Ascending aorta (tissue), 2 donors: ENCODE measurements at regions of chr3 and their contacts with region 1.

Region 1: DNA sequence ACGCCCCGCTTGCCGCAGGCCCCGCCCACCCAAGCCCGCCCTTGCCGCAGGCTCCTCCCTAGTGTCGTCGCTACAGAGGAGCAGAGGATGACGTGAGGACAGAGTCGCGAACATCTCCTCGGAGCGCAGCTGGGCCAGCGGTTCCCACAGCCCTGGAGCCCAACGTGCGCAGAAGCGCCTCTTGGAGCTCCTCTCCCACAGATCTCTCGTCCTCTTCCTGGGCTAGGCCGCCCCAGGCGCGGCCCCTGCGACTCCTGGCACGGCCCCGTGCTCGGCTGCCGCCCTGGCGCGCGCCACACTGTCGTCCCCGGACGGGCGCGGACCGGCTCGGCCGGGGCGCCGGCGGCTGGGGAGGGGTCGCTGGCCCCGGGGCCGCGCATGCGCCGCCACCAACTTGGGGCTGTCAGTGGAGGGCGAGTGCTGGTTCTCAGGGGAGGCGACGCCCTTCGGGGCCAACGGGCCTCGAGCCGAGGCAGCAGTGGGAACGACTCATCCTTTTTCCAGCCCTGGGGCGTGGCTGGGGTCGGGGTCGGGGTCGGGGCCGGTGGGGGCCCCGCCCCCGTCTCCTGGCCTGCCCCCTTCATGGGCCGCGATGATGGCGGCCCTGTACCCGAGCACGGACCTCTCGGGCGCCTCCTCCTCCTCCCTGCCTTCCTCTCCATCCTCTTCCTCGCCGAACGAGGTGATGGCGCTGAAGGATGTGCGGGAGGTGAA is at the start of gene TRPC1:
- DNase-seq: peak; percentile 22 to 80
- H3K4me3 ChIP-seq: peak within 1 kb of the TSS; percentile 77 to 91
- H3K27ac ChIP-seq: peak within 1 kb of the TSS; percentile 78 to 87
- H3K4me1 ChIP-seq: no peaks in the 10 kb centered on the region
- H3K27me3 ChIP-seq: no peaks in the 10 kb centered on the region
- CTCF ChIP-seq: no peak
- total RNA-seq, gene TRPC1: 12.3 TPM

Region 2: GRCh38 chr3:140941434-140942220 is 1782.5 kb before region 1 on chr3 and contains the start of gene SLC25A36:
- intact Hi-C with region 1: loop called (anchors 5 kb)
- DNase-seq: peak; percentile 92 to 98
- H3K4me3 ChIP-seq: peak within 1 kb of the TSS; percentile 73 to 99
- H3K27ac ChIP-seq: peak within 1 kb of the TSS; percentile 99
- H3K4me1 ChIP-seq: peaks cover 0 to 15% of the 10 kb centered on the region in 2 donors
- H3K27me3 ChIP-seq: no peaks in the 10 kb centered on the region
- CTCF ChIP-seq: peak in 1 of 3 experiments; percentile 4
- total RNA-seq, gene SLC25A36: 19.1 TPM

Region 3: DNA sequence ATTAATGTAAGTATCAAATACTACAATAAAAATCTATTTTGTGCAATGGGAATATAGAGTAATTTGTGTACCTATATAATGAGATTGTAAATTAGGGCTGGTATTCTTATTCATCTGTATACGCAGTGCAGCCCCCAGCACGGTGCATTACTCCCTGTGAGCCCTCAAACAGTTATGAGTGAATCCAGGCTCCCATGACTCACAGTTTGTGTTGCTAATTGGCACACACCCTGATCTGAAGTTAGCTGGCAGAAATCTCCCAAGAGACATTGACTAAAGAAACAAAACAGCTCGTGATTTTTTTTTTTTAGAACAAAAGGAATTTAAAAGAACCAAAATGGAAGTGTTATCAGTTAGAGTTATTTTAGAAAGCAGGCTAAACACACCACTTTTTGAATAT is 514.5 kb before region 1 on chr3:
- intact Hi-C with region 1: no loop called
- DNase-seq: peak in 1 of 2 donors; percentile 86
- H3K4me3 ChIP-seq: peak overlapping the region; percentile 18 to 30
- H3K27ac ChIP-seq: peak overlapping the region; percentile 71 to 72
- H3K4me1 ChIP-seq: peaks cover 0 to 36% of the 10 kb centered on the region in 2 donors
- H3K27me3 ChIP-seq: no peaks in the 10 kb centered on the region
- CTCF ChIP-seq: no peak

Region 4: GRCh38 chr3:142578327-142579223 is 145.6 kb before region 1 on chr3 and contains the start of gene ATR:
- intact Hi-C with region 1: loop called (anchors 2 kb)
- DNase-seq: peak; percentile 85 to 98
- H3K4me3 ChIP-seq: peak within 1 kb of the TSS; percentile 65 to 81
- H3K27ac ChIP-seq: peak within 1 kb of the TSS; percentile 91 to 94
- H3K4me1 ChIP-seq: peaks cover 0 to 10% of the 10 kb centered on the region in 2 donors
- H3K27me3 ChIP-seq: no peaks in the 10 kb centered on the region
- CTCF ChIP-seq: no peak
- total RNA-seq, gene ATR: 8.3 TPM

Region 5: DNA sequence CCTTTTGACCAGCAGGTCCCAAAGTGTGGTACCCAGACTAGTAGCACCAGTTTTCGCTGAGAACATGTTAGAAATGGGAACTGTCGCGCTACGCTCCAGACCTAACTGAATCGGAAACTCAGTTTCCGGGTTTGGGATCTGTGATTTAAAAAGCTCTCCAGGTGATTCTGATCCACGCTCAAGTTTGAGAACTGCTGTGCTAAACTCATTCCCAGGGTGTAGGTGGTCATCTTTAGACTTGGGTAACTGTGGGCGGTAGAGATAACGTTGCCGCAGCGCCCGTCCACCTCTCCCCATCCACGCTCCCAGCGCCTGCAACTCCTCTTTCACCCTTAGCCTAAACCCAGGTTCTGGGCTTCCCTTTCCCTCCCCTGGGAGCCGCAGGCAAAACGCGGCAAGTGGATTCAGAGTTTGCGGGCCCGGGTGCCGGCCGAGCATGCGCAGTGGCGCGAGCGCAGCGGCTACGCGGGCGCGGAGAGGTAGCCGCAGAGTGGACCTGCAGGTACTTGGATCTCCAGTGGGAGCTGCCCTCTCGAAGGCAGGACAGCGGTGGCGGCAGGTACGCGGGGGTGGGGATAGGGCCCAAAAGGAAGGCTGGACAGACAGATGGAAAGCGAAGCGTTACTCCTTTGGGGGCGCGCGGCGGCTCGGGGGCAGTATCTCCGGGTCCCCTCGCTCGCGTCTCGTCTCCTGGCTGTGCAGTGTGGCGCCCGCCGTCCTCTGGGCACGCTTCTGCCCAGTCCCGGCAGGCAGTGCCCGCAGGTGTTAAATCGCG is 128.0 kb before region 1 on chr3 and contains the start of gene PLS1:
- intact Hi-C with region 1: loop called (anchors 1 kb)
- DNase-seq: peak; percentile 37 to 89
- H3K4me3 ChIP-seq: peak within 1 kb of the TSS; percentile 67 to 73
- H3K27ac ChIP-seq: peak within 1 kb of the TSS; percentile 46 to 56
- H3K4me1 ChIP-seq: peaks cover 0 to 3% of the 10 kb centered on the region in 2 donors
- H3K27me3 ChIP-seq: no peaks in the 10 kb centered on the region
- CTCF ChIP-seq: no peak
- total RNA-seq, gene PLS1: 1.8 TPM

Region 6: GRCh38 chr3:143001369-143002082 is 277.4 kb after region 1 on chr3 and contains the start of gene U2SURP:
- intact Hi-C with region 1: loop called (anchors 5 kb)
- DNase-seq: peak; percentile 85 to 98
- H3K4me3 ChIP-seq: peak within 1 kb of the TSS; percentile 93 to 94
- H3K27ac ChIP-seq: peak within 1 kb of the TSS; percentile 93
- H3K4me1 ChIP-seq: peaks cover 4 to 28% of the 10 kb centered on the region in 2 donors
- H3K27me3 ChIP-seq: no peaks in the 10 kb centered on the region
- CTCF ChIP-seq: peak in 1 of 3 experiments; percentile 26
- total RNA-seq, gene U2SURP: 68.6 TPM